ENCODE measurements at regions of chr22 and their contacts with region 1.

Region 1: DNA sequence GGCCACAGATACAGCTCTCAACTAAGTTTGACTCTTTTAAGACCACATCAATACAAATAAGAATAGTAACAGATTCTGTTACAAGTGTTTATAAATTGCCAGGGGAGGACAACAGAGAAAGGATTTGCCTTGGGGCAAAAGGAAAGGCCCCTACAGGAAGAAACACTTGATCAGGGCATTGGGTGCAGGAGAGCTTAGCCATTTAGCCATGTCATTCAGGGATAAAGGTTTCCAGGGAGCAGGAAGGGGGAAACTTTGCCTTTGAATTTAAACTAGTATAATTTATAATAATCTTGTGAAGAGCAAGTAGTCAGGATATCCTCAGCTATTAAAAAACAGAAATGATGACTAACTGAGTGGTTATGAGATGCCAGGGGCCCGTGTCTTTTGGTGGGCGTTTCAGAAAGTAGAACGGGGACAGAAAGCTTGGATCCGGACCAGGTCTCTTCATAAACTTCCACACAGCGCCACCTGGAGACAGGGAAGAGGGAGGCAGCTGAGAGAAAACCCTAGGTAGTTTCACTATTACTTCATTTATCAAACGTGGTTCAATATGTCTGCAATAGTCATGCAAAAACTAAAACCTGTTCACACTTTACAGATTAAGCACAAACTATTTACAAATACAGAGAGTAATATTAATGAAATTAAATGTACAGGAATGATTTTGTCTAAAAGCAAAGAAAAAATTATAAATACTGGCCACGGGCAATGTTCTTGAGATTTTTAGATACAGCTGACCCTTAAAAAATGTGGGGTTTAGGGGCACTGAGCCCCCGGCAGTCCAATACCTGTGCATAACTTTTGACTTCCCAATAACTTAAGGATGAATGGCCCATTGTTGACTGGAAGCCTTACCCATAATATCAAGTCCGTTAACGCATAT is 11.0 kb upstream of the SLC5A4 start:
- DNase-seq: peak in 1 of 2 experiments; percentile 79
- H3K4me3 ChIP-seq: no peak overlapping the region
- H3K27ac ChIP-seq: no peak overlapping the region
- H3K4me1 ChIP-seq: no peaks in the 10 kb centered on the region
- H3K27me3 ChIP-seq: no peaks in the 10 kb centered on the region
- CTCF ChIP-seq: peak; percentile 53 to 79 (median 78)
- EP300 ChIP-seq: no peak
- POLR2A ChIP-seq: no peak
- RAD21 ChIP-seq: peak; percentile 71 to 78

Region 2: GRCh38 chr22:32103658-32104315 is 162.3 kb before region 1 on chr22:
- CTCF ChIA-PET with region 1: interaction called, 10 read pairs
- POLR2A ChIA-PET with region 1: no interaction called
- DNase-seq: no peak
- H3K4me3 ChIP-seq: no peak overlapping the region
- H3K27ac ChIP-seq: no peak overlapping the region
- H3K4me1 ChIP-seq: no peaks in the 10 kb centered on the region
- H3K27me3 ChIP-seq: no peaks in the 10 kb centered on the region; a peak in 1 of 7 replicates
- CTCF ChIP-seq: peak in 2 of 3 experiments; percentile 24 to 29; a peak in 2 of 4 replicates
- EP300 ChIP-seq: no peak
- POLR2A ChIP-seq: no peak
- RAD21 ChIP-seq: peak; percentile 48 to 53

Region 3: DNA sequence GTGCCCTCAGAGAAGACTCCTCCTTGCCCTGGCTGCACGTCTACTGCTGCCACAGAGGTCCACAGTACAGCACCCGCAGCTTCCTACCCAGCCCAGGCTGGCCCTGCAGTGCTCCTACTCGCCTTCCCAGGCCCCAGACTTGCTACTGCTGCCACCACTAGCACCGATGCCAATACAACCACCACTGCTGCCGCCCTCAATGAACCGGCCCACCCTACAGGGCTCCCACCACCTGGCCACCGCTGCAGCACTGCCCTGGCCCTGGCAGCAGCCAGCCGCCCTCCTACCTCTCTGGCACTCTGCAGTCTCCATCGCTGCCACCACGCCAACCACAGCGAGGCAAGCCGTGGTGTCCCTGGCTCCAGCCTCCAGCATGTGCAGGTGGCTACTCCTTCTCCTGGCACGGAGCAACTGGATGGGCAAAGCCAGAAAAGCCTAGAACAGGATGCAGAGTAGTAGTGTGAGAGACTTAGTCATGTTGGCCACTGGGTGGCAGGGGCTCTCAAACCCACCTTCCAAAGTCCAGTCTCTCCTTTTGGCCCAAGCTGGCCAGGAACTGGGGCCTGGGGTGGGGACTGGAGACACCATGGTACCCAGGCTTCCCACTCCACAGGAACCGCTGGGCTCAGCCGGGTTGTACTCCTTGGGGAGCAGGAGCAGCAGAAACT is 146.4 kb before region 1 on chr22:
- CTCF ChIA-PET with region 1: no interaction called
- POLR2A ChIA-PET with region 1: no interaction called
- DNase-seq: peak in 1 of 2 experiments; percentile 45
- H3K4me3 ChIP-seq: no peak overlapping the region
- H3K27ac ChIP-seq: no peak overlapping the region
- H3K4me1 ChIP-seq: no peaks in the 10 kb centered on the region
- H3K27me3 ChIP-seq: no peaks in the 10 kb centered on the region
- CTCF ChIP-seq: peak; percentile 2 to 35 (median 29); a peak in 3 of 4 replicates
- EP300 ChIP-seq: no peak
- POLR2A ChIP-seq: no peak
- RAD21 ChIP-seq: peak in 1 of 2 experiments; percentile 28; a peak in 2 of 4 replicates

Region 4: GRCh38 chr22:32211011-32211410 is 55.1 kb before region 1 on chr22:
- CTCF ChIA-PET with region 1: interaction called, 22 read pairs
- POLR2A ChIA-PET with region 1: no interaction called
- DNase-seq: no peak
- H3K4me3 ChIP-seq: no peak overlapping the region
- H3K27ac ChIP-seq: no peak overlapping the region
- H3K4me1 ChIP-seq: peaks cover 0 to 9% (median 4%) of the 10 kb centered on the region in 4 experiments; a peak in 4 of 7 replicates
- H3K27me3 ChIP-seq: peaks cover 0 to 7% (median 3%) of the 10 kb centered on the region in 4 experiments; a peak in 4 of 7 replicates
- CTCF ChIP-seq: no peak
- EP300 ChIP-seq: no peak
- POLR2A ChIP-seq: no peak
- RAD21 ChIP-seq: no peak

Region 5: GRCh38 chr22:32255726-32256125 is 10.4 kb before region 1 on chr22:
- CTCF ChIA-PET with region 1: interaction called, 12 read pairs
- POLR2A ChIA-PET with region 1: no interaction called
- DNase-seq: no peak
- H3K4me3 ChIP-seq: no peak overlapping the region
- H3K27ac ChIP-seq: no peak overlapping the region
- H3K4me1 ChIP-seq: no peaks in the 10 kb centered on the region
- H3K27me3 ChIP-seq: no peaks in the 10 kb centered on the region; a peak in 2 of 7 replicates
- CTCF ChIP-seq: no peak
- EP300 ChIP-seq: no peak
- POLR2A ChIP-seq: no peak
- RAD21 ChIP-seq: no peak

Region 6: DNA sequence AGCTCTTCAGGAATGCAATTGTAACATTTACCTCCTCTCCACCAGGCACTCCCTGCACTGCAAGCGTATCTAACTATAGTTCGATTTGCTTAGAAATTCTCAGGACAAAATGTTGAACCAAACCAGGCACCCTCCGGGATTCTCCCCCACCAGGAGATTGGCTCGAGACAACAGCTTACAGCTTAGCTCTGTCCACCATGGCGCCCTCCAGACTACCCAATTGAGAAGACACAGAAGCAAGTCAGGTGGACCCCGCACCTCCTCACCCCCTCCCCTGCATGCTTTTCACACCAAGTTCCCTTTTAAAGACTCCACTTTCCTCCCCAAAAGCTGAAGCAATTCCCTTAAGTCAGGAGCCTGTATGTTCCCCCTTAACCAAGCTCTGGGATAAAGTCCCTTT is 56.9 kb after region 1 on chr22:
- CTCF ChIA-PET with region 1: interaction called, 13 read pairs
- POLR2A ChIA-PET with region 1: no interaction called
- DNase-seq: peak in 1 of 2 experiments; percentile 37
- H3K4me3 ChIP-seq: no peak overlapping the region
- H3K27ac ChIP-seq: no peak overlapping the region
- H3K4me1 ChIP-seq: peaks cover 4 to 17% (median 12%) of the 10 kb centered on the region in 4 experiments
- H3K27me3 ChIP-seq: no peaks in the 10 kb centered on the region; a peak in 2 of 7 replicates
- CTCF ChIP-seq: no peak
- EP300 ChIP-seq: no peak
- POLR2A ChIP-seq: no peak
- RAD21 ChIP-seq: no peak

Region 7: DNA sequence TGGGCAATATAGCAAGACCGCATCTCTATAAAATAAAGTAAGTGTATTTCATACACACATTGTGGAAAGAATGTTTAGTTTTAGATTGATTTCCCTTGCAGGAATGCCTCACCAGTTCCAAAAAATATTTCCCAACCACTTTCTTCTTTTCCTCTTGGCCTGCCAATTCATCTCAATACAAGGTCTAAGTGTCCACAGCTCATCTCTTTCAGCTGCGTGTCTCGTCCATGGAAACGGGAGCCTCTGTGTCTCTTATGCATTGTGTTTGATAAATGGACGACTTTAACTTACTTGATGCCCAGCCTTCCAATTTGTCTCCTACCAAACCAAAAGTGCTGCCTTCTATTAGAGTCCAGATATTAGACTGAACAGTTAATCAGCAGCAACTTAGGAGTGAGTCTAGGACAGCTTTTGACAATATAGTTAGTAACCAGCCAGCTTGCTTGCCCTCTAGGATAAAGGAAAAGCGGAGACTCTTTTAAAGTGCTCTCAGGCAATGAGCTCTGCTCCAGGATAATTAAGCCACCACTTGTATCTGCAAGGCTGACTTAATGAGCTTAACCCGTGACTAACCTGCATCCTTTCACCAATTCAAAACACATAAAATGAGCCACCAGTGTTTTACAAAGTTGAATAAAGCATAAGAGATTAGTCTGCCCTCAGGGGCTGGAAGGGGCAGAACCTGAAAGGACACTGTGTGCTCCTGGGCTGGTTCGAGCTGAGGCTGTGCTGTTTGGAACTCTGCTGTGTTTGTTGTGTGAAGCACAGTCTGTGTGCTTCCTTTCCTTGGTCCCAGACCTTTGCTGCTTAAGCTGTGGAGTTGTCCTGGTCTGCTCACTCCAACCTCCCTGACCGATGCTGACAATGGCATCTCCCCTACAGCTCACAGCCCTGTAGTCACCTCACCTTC is 236.0 kb after region 1 on chr22:
- CTCF ChIA-PET with region 1: no interaction called
- POLR2A ChIA-PET with region 1: no interaction called
- DNase-seq: no peak
- H3K4me3 ChIP-seq: no peak overlapping the region
- H3K27ac ChIP-seq: no peak overlapping the region
- H3K4me1 ChIP-seq: peaks cover 0 to 4% (median 2%) of the 10 kb centered on the region in 4 experiments; a peak in 4 of 7 replicates
- H3K27me3 ChIP-seq: no peaks in the 10 kb centered on the region
- CTCF ChIP-seq: no peak
- EP300 ChIP-seq: no peak
- POLR2A ChIP-seq: no peak
- RAD21 ChIP-seq: no peak